ENCODE measurements at regions of chr17 and their contacts with region 1.

Region 1: GRCh38 chr17:17041571-17042380 is 481 bp upstream of the MPRIP start:
- H3K4me3 ChIP-seq: peak overlapping the region; percentile 49
- H3K27ac ChIP-seq: no peak overlapping the region; the same call in 1 of the 2 replicates
- H3K4me1 ChIP-seq: peaks cover 19% of the 10 kb centered on the region
- CTCF ChIP-seq: no peak

Region 2: GRCh38 chr17:16991349-16992009 is 50.3 kb before region 1 on chr17:
- CTCF ChIA-PET with region 1: no interaction called
- POLR2A ChIA-PET with region 1: no interaction called
- H3K4me3 ChIP-seq: no peak overlapping the region
- H3K27ac ChIP-seq: no peak overlapping the region
- H3K4me1 ChIP-seq: no peaks in the 10 kb centered on the region; the same call in 1 of the 2 replicates
- CTCF ChIP-seq: peak; percentile 83

Region 3: GRCh38 chr17:17028059-17028877 is 13.5 kb before region 1 on chr17:
- CTCF ChIA-PET with region 1: interaction called, 4 read pairs
- POLR2A ChIA-PET with region 1: interaction called, 11 read pairs
- H3K4me3 ChIP-seq: no peak overlapping the region
- H3K27ac ChIP-seq: no peak overlapping the region; the same call in 1 of the 2 replicates
- H3K4me1 ChIP-seq: peaks cover 4% of the 10 kb centered on the region; the same call in 1 of the 2 replicates
- CTCF ChIP-seq: no peak